CD8-positive, alpha-beta T cell (primary cell): ENCODE measurements at regions of chr3 and their contacts with region 1.

Region 1: GRCh38 chr3:138694287-138695007 is 85.9 kb downstream of the FAIM start:
- DNase-seq: no peak
- ATAC-seq: no peak
- H3K4me3 ChIP-seq: no peak overlapping the region
- H3K4me3 Mint-ChIP-seq: no peak overlapping the region
- H3K27ac ChIP-seq: no peak overlapping the region
- H3K27ac Mint-ChIP-seq: no peak overlapping the region
- H3K4me1 ChIP-seq: no peaks in the 10 kb centered on the region
- H3K4me1 Mint-ChIP-seq: no peaks in the 10 kb centered on the region
- H3K27me3 ChIP-seq: no peaks in the 10 kb centered on the region
- H3K27me3 Mint-ChIP-seq: no peaks in the 10 kb centered on the region
- CTCF ChIP-seq: no peak

Region 2: DNA sequence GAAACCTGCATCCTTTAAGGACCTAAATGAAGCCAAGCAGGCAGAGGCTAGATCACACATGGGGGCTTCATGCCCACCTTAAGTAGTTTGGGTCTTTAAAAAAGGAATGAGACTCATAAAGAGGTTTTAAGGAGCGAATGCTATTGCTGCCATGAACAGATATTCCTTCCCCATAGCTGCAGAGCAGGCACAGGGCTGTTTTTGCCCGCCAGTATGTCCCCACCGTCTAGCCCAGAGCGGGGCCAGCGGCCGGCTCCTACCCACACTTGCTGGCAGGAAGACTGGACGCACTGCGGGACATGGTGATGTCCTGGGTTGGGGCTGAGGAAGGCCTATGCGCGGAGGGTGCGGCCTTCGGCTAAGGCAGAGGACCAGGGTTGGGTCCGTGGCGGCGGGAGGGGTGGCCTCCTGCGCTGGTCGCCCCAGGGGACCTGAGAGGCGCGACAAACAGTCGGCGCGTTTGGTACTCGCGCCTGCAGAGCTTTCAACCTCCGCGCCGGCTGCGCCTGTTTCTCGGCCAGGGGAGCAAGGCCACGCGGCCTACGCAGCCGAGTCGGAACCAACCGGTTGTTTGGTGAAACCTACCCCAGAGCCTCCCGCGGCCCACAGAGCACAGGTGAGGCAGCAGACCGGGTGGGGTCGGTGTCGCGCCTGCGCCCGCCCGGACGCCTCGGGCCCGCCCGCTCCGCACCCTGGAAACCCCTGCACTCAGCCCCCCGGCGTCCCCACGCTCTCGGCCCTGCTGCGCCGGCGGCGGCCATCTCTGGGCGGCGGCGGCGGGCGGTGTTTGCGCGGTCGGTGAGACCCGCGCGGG is 85.9 kb before region 1 on chr3 and contains the start of gene FAIM:
- CTCF ChIA-PET with region 1: no interaction called
- POLR2A ChIA-PET with region 1: interaction called, 4 read pairs
- intact Hi-C with region 1: loop called (anchors 5 kb)
- DNase-seq: peak; percentile 52 to 84 (median 70)
- ATAC-seq: peak; percentile 76
- H3K4me3 ChIP-seq: peak within 1 kb of the TSS; percentile 71 to 83
- H3K4me3 Mint-ChIP-seq: peak within 1 kb of the TSS; percentile 86
- H3K27ac ChIP-seq: peak within 1 kb of the TSS; percentile 84 to 86
- H3K27ac Mint-ChIP-seq: peak within 1 kb of the TSS; percentile 96
- H3K4me1 ChIP-seq: peaks cover 14% of the 10 kb centered on the region
- H3K4me1 Mint-ChIP-seq: peaks cover 15% of the 10 kb centered on the region
- H3K27me3 ChIP-seq: no peaks in the 10 kb centered on the region
- H3K27me3 Mint-ChIP-seq: no peaks in the 10 kb centered on the region
- CTCF ChIP-seq: no peak
- total RNA-seq, gene FAIM: 2.0 to 2.6 TPM